Prostate gland (tissue), 2 donors: ENCODE measurements at regions of chr1 and their contacts with region 1.

Region 1: GRCh38 chr1:182348961-182349747 is 42.4 kb downstream of the GLUL start:
- DNase-seq: no peak
- H3K4me3 ChIP-seq: no peak overlapping the region
- H3K27ac ChIP-seq: peak overlapping the region in 1 of 2 donors; percentile 27
- H3K4me1 ChIP-seq: no peaks in the 10 kb centered on the region
- H3K27me3 ChIP-seq: no peaks in the 10 kb centered on the region
- CTCF ChIP-seq: no peak
- POLR2A ChIP-seq: no peak

Region 2: GRCh38 chr1:182249201-182249676 is 99.9 kb before region 1 on chr1:
- intact Hi-C with region 1: no loop called
- DNase-seq: no peak
- H3K4me3 ChIP-seq: no peak overlapping the region
- H3K27ac ChIP-seq: no peak overlapping the region
- H3K4me1 ChIP-seq: no peaks in the 10 kb centered on the region
- H3K27me3 ChIP-seq: no peaks in the 10 kb centered on the region
- CTCF ChIP-seq: no peak
- POLR2A ChIP-seq: no peak

Region 3: GRCh38 chr1:182299728-182300616 is 49.2 kb before region 1 on chr1:
- intact Hi-C with region 1: loop called (anchors 5 kb)
- DNase-seq: no peak
- H3K4me3 ChIP-seq: no peak overlapping the region
- H3K27ac ChIP-seq: no peak overlapping the region
- H3K4me1 ChIP-seq: no peaks in the 10 kb centered on the region
- H3K27me3 ChIP-seq: no peaks in the 10 kb centered on the region
- CTCF ChIP-seq: no peak
- POLR2A ChIP-seq: no peak